Cardiac septum (tissue), 1 donor: ENCODE measurements at regions of chr11 and their contacts with region 1.

Region 1: GRCh38 chr11:44766112-44766971 is 39.6 kb downstream of the TSPAN18 start:
- DNase-seq: peak; percentile 87

Region 2: GRCh38 chr11:44627911-44628729 is 138.2 kb before region 1 on chr11:
- intact Hi-C with region 1: loop called (anchors 5 kb)
- DNase-seq: peak; percentile 91

Region 3: DNA sequence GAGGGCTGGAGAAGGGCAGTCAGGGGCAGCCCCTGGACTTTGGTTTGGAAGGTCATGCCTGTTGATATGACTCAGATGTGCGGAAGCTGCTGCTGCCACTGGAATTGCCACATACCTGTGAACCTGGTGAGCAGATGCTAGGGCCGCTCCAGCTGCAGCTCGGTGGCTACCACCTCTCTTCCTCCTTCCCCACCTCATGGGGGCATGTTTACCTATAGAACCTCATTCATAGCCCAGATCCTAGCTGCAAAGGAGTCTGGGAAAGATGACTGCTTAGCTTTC is 57.1 kb before region 1 on chr11:
- intact Hi-C with region 1: no loop called
- DNase-seq: no peak